CD4-positive, alpha-beta memory T cell (primary cell): ENCODE measurements at regions of chr10 and their contacts with region 1.

Region 1: DNA sequence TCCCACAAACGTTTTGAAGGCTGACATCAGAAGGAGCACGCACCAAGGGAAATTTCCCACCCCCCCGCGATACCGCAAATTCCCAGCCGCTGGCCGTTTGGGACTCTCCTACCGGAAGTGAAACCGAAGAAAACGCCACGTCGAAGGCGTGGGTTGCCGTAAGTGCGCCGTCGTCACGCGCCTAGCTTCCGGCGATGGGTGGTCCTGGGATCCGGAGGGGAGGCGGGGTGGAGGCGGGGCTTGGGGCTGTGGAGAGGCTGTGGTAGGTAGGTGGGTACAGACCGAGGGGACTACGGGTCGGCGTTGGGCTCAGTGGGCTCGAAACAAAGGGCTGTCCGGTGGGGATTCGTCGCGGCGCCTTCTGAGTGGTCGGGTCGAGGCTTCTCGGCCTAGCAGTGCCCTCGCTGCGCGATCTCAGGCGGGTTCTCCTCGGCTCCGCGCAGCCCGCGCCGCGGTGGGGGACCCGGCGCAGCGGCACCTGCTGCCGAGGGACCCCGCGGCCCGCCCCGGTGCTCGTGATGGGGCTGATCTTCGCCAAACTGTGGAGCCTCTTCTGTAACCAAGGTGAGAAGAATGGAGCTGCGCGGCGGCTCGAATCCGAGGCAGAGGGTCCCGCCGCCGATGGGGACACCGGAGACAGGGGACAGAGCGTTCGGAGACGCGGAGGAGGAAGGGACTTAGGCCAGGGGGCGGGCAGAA is at the start of gene ARL5B:
- DNase-seq: peak; percentile 93 to 98 (median 94)
- H3K4me3 ChIP-seq: peak within 1 kb of the TSS; percentile 85 to 99
- H3K4me3 Mint-ChIP-seq: peak within 1 kb of the TSS; percentile 99 to 100 (median 100)
- H3K27ac ChIP-seq: peak within 1 kb of the TSS; percentile 94
- H3K27ac Mint-ChIP-seq: peak within 1 kb of the TSS; percentile 96 to 100 (median 99)
- H3K4me1 ChIP-seq: peaks cover 36% of the 10 kb centered on the region
- H3K4me1 Mint-ChIP-seq: peaks cover 26 to 54% (median 40%) of the 10 kb centered on the region in 4 donors
- H3K27me3 ChIP-seq: no peaks in the 10 kb centered on the region
- H3K27me3 Mint-ChIP-seq: no peaks in the 10 kb centered on the region
- total RNA-seq, gene ARL5B: 13.1 to 14.1 TPM

Region 2: GRCh38 chr10:17023386-17024298 is 1635.6 kb before region 1 on chr10:
- CTCF ChIA-PET with region 1: no interaction called
- POLR2A ChIA-PET with region 1: no interaction called
- intact Hi-C with region 1: loop called (anchors 10 kb)
- DNase-seq: peak; percentile 87 to 96 (median 91)
- H3K4me3 ChIP-seq: peak overlapping the region in 1 of 2 donors; percentile 4
- H3K4me3 Mint-ChIP-seq: peak overlapping the region; percentile 6 to 74 (median 54)
- H3K27ac ChIP-seq: peak overlapping the region; percentile 88
- H3K27ac Mint-ChIP-seq: peak overlapping the region; percentile 92 to 100 (median 99)
- H3K4me1 ChIP-seq: peaks cover 63% of the 10 kb centered on the region
- H3K4me1 Mint-ChIP-seq: peaks cover 46 to 76% (median 57%) of the 10 kb centered on the region in 4 donors
- H3K27me3 ChIP-seq: no peaks in the 10 kb centered on the region
- H3K27me3 Mint-ChIP-seq: no peaks in the 10 kb centered on the region

Region 3: GRCh38 chr10:18607503-18608378 is 51.5 kb before region 1 on chr10:
- CTCF ChIA-PET with region 1: no interaction called
- POLR2A ChIA-PET with region 1: no interaction called
- intact Hi-C with region 1: loop called (anchors 10 kb)
- DNase-seq: no peak
- H3K4me3 ChIP-seq: no peak overlapping the region
- H3K4me3 Mint-ChIP-seq: no peak overlapping the region
- H3K27ac ChIP-seq: no peak overlapping the region
- H3K27ac Mint-ChIP-seq: peak overlapping the region in 1 of 7 donors; percentile 25
- H3K4me1 ChIP-seq: no peaks in the 10 kb centered on the region
- H3K4me1 Mint-ChIP-seq: no peaks in the 10 kb centered on the region
- H3K27me3 ChIP-seq: no peaks in the 10 kb centered on the region
- H3K27me3 Mint-ChIP-seq: no peaks in the 10 kb centered on the region

Region 4: GRCh38 chr10:18625886-18626285 is 33.4 kb before region 1 on chr10:
- CTCF ChIA-PET with region 1: interaction called, 3 read pairs
- POLR2A ChIA-PET with region 1: interaction called, 8 read pairs
- intact Hi-C with region 1: loop called (anchors 1 kb)
- DNase-seq: no peak
- H3K4me3 ChIP-seq: no peak overlapping the region
- H3K4me3 Mint-ChIP-seq: peak overlapping the region in 3 of 8 donors; percentile 32 to 57 (median 55)
- H3K27ac ChIP-seq: no peak overlapping the region
- H3K27ac Mint-ChIP-seq: peak overlapping the region in 2 of 7 donors; percentile 23 to 25
- H3K4me1 ChIP-seq: no peaks in the 10 kb centered on the region
- H3K4me1 Mint-ChIP-seq: peaks cover 3 to 24% (median 7%) of the 10 kb centered on the region in 4 donors
- H3K27me3 ChIP-seq: no peaks in the 10 kb centered on the region
- H3K27me3 Mint-ChIP-seq: no peaks in the 10 kb centered on the region